ENCODE measurements at regions of chr1 and their contacts with region 1.

Region 1: DNA sequence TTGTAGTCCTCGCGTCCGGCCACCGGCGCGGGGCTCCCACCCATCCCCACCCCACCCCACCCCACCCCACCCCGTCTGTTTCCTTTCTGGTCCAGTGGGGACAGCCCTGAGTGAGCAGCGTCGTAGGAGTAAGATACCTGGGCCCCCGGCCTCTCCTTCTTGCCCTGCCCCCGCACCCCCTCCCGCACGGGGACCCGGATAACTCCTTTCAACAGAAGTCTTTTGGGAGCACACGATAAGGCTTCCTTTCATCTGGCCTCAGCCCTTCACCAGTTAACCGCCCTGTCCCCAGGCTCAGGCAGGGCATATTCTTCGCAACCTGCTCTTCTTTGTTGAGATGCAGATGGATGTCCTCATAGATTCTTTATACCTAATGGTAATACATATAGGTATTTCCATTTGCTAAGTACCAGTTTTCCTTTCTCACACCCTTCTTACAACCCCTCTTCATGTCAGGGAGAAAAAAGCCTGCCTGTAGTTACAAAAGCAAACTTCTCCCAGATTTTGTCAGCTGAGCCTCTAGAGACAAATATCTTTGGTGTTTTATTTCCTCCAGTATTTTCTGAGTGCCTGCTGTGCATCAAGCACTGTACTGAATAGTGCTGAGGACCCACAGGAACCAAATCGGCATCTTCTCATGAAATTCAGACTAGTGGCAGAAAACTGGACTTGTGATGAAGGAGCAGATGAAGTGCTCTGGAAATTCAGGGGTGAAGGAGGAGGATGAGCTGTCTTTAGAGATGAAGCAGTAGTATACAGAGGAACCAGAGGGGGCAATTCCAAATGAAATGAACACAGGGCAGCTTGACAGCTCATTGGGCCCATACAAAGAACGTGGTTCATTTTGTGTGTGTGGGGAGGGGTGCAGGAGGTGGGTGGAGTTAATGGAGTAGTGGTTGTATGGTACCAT is 33.6 kb downstream of the SLC2A1 start:
- DNase-seq: no peak
- H3K4me3 ChIP-seq: peak overlapping the region in 2 of 3 donors; percentile 43 to 97
- H3K27ac ChIP-seq: peak overlapping the region; percentile 84 to 98 (median 90)
- H3K4me1 ChIP-seq: peaks cover 4 to 7% of the 10 kb centered on the region in 2 donors
- H3K27me3 ChIP-seq: no peaks in the 10 kb centered on the region
- CTCF ChIP-seq: no peak
- POLR2A ChIP-seq: no peak

Region 2: DNA sequence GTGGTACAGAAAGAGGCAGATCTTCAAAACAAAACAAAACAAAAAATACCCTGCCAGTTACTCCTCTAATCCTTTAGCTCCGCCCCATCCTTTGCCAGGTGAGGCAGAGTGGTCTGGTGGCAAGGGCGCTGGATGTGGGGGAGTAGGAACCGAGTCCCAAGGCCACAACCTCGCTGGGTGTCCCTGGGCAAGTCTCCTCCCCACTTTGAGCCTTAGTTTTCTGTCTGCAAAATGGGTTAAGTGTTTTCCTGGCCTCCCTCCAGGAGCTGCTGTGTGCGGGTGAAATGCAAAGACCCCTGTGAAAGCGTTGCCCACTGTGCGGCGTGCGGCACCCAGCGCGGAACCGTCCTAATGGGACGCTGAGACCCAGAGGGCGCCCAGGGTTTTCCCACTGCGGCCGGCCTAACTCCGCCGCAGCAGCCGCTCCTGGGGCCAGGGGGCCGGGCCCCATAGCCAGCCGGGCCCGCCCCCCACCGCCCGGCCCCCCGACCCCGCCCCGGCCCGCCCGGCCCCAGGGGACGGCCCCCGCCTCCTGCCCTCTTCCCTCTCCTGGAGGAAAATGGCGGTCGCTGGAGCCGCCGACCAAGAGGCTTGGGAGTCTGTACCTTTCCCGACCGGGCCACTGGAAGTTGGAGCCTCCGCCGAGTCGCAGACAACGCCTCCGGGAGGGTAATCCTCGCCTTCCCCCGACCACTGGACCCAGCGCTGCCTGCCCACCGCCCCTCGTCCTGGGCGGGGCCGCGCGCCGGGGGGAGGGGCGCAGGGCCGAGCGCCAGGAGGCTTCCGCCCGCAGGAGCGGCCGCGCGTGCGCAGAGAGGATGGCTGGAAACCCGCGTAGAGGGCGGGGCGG is 108.3 kb before region 1 on chr1 and contains the starts of genes ERMAP and SVBP:
- intact Hi-C with region 1: no loop called
- DNase-seq: peak; percentile 90 to 91
- H3K4me3 ChIP-seq: peak within 1 kb of the TSS; percentile 37 to 93 (median 43)
- H3K27ac ChIP-seq: peak within 1 kb of the TSS; percentile 91 to 100 (median 97)
- H3K4me1 ChIP-seq: peaks cover 10 to 13% of the 10 kb centered on the region in 2 donors
- H3K27me3 ChIP-seq: no peaks in the 10 kb centered on the region
- CTCF ChIP-seq: no peak
- POLR2A ChIP-seq: peak in 1 of 2 donors; percentile 60
- total RNA-seq, gene ERMAP: 23.7 to 36.5 (median 28.9) TPM
- total RNA-seq, gene SVBP: 20.4 to 29.0 (median 21.6) TPM

Region 3: DNA sequence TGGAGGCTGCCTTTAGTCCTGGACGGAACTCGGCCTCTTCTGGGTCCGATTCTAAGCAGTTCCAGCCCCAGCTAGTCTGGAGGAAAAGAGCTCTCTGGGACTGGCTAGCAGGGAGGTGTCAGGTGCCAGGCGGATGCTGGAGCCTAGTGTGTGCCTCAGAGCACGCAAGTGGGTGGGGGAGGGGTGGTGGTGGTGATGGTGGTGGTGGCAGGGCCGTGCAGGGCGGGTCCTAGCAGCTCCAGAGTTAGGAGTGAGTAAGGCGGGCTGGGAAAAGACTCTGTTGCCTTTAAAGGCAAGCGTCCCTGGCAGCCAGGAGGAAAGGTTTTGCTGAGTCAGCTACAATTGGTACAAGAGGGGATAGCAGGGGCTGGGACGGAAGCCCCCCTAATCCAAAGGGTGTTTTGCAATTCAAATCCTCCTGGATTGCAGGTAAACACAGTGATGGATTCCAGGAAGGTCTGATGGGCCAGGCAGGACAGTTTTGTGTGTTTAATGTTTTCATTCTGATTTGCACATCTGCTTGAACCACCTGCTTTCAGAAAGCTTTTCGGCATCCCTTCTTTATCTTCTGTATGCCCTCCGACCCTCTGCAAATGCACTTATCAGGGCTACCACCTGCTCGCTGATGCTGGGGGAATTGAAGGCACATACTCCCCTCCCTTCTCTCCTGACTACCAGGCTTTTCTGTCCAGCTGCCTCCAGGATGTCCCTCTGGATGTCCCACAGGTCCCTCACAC is 37.7 kb after region 1 on chr1:
- intact Hi-C with region 1: loop called (anchors 5 kb)
- DNase-seq: peak; percentile 47 to 50
- H3K4me3 ChIP-seq: no peak overlapping the region
- H3K27ac ChIP-seq: no peak overlapping the region
- H3K4me1 ChIP-seq: peaks cover 2 to 7% of the 10 kb centered on the region in 2 donors
- H3K27me3 ChIP-seq: no peaks in the 10 kb centered on the region
- CTCF ChIP-seq: no peak
- POLR2A ChIP-seq: no peak

Region 4: GRCh38 chr1:43015015-43015668 is 90.0 kb after region 1 on chr1:
- intact Hi-C with region 1: no loop called
- DNase-seq: no peak
- H3K4me3 ChIP-seq: no peak overlapping the region
- H3K27ac ChIP-seq: no peak overlapping the region
- H3K4me1 ChIP-seq: no peaks in the 10 kb centered on the region
- H3K27me3 ChIP-seq: no peaks in the 10 kb centered on the region
- CTCF ChIP-seq: no peak
- POLR2A ChIP-seq: no peak

Region 5: DNA sequence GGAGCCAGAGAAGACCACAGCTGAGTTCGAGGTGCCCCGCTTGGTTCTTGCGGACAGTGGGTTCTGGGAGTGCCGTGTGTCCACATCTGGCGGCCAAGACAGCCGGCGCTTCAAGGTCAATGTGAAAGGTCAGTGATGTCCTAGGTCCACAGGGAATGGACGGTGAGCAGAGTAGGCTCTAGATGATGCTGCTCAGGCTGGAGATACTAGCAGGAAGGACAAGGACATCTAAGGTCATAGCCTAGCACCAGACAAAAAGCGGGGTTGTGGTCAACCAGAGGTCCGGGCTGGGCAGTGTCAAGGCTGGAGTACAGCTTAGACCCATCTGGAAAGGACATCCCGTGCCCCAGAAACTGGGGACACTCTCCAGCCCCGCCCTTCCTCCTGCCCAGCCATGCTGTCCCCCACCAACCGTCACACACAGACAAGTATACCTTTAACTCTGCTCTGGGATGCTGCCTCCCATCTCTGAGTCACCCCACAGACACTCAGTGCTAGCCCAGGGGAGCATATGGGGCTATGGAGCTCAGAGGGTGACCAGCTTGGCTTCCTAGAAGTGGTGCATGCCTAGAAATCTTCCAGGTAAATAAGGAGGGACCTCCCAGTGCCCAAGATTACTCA is 384.4 kb after region 1 on chr1:
- intact Hi-C with region 1: no loop called
- DNase-seq: no peak
- H3K4me3 ChIP-seq: no peak overlapping the region
- H3K27ac ChIP-seq: no peak overlapping the region
- H3K4me1 ChIP-seq: peaks cover 37 to 39% of the 10 kb centered on the region in 2 donors
- H3K27me3 ChIP-seq: no peaks in the 10 kb centered on the region
- CTCF ChIP-seq: no peak
- POLR2A ChIP-seq: no peak